HCT116 (cell line): ENCODE measurements at regions of chr1 and their contacts with region 1.

Region 1: DNA sequence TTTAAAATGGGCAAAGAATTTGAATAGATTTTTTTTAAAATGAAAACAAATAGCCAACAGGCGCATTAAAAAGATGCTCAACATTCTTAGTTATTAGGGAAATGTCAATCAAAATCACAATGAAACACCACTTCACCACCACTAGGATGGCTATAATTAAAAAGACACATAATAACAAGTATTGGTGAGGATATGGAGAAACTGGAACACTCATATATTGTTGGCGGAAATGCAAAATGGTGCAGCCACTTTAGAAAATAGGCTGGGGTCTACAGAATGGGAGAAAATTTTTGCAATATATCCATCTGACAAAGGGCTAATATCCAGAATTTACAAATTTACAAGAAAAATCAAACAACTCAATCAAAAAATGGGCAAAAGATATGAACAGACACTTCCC is 107.8 kb upstream of the FOXD3 start:
- DNase-seq: no peak
- ATAC-seq: no peak
- H3K4me3 ChIP-seq: no peak overlapping the region
- H3K27ac ChIP-seq: no peak overlapping the region
- H3K4me1 ChIP-seq: no peaks in the 10 kb centered on the region
- H3K27me3 ChIP-seq: no peaks in the 10 kb centered on the region
- CTCF ChIP-seq: no peak
- POLR2A ChIP-seq: no peak
- RAD21 ChIP-seq: no peak

Region 2: DNA sequence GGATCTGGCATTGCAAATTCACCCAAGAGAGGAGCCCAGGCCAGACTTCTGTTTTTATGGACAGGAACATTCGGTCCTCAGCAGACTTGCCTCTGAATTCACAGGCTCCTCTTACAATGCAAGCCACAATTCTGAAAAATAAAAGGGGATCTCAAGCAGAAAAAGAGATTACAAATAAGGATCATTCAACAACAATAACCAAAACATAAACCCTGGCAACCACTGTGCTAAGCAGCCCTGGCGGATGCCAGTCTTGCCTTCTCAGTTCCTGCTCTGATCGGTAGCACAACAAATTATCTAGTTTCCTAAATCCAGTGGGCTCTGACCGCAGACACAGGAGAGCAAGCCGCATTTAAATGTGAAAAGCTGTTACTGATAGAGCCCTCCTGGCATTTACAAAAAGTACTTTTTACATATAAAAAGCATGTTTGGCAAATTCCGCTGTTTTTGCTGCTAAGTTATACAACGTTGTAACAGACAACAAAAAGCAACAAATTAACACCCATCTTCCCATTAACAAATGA is 15.6 kb before region 1 on chr1:
- CTCF ChIA-PET with region 1: no interaction called
- POLR2A ChIA-PET with region 1: interaction called, 3 read pairs
- RAD21 ChIA-PET with region 1: no interaction called
- intact Hi-C with region 1: loop called (anchors 1 kb)
- DNase-seq: no peak
- ATAC-seq: no peak
- H3K4me3 ChIP-seq: no peak overlapping the region
- H3K27ac ChIP-seq: no peak overlapping the region
- H3K4me1 ChIP-seq: no peaks in the 10 kb centered on the region
- H3K27me3 ChIP-seq: no peaks in the 10 kb centered on the region
- CTCF ChIP-seq: no peak
- POLR2A ChIP-seq: no peak
- RAD21 ChIP-seq: no peak